CD8-positive, alpha-beta T cell (primary cell): ENCODE measurements at regions of chr16 and their contacts with region 1.

Region 1: DNA sequence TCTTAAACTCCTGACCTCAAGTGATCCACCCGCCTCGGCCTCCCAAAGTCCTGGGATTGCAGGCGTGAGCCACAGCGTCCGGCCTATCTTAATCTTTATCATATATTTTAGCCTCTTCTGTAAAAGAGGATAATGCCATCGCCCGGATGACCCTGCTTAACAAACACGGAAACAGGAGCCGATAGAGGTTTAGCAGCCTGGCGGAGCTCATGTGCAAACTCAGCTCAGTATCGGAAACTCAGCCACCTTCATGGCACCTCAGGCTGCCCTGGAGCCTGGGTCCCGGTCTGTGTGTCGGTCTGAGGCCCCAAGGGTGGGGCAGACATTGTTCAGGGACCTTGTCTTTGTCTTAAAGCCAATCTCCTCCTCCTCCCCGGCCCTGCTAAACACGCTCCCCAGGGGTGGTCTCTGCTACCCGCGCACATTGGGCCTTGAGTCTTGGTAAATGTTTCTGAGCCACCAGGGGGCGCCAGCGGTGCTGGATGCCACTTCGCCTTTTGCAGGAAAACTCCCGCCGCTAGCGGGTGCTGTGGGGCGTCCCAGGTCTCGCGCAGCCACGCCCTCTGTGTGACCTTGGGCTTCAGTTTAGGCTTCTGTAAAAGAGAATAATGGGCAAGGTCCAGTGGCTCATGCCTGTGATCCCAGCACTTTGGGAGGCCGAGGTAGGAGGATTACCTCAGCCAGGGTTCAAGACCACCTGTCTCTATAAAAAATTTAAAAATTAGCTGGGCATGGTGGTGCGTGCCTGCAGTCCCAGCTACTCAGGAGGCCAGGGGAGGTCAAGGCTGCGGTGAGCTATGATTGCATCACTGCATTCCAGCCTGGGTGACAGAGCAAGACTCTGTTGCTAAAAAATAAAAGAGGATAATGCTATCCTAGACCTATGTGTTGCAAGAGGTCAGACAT is 2.7 kb downstream of the CETP start:
- DNase-seq: peak; percentile 91 to 99 (median 95)
- ATAC-seq: peak; percentile 96
- H3K4me3 ChIP-seq: no peak overlapping the region
- H3K4me3 Mint-ChIP-seq: no peak overlapping the region
- H3K27ac ChIP-seq: no peak overlapping the region
- H3K27ac Mint-ChIP-seq: peak overlapping the region; percentile 84
- H3K4me1 ChIP-seq: peaks cover 21% of the 10 kb centered on the region
- H3K4me1 Mint-ChIP-seq: peaks cover 23% of the 10 kb centered on the region
- H3K27me3 ChIP-seq: no peaks in the 10 kb centered on the region
- H3K27me3 Mint-ChIP-seq: no peaks in the 10 kb centered on the region
- CTCF ChIP-seq: peak; percentile 99

Region 2: DNA sequence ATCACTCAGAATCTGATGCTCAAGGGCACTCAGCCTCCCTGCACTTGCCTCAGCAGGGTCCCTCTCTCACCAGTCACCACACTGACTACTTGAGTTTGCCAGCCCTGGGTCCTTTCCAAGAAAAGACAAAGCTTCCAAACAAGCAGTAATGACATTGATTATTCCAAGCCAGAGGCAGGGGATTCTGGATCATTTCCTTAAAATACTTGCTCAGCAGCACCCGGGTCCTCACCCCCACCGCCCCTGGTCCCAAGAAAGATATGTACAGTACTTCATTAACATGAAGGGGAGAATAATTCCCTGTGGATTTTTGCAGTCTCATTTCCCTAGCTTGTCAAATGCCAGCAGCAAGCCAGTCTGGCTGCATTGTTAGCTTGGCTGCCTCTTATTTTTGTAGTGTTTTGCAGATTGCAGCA is 856.4 kb before region 1 on chr16:
- CTCF ChIA-PET with region 1: no interaction called
- POLR2A ChIA-PET with region 1: no interaction called
- intact Hi-C with region 1: no loop called
- DNase-seq: no peak
- ATAC-seq: no peak
- H3K4me3 ChIP-seq: no peak overlapping the region
- H3K4me3 Mint-ChIP-seq: no peak overlapping the region
- H3K27ac ChIP-seq: no peak overlapping the region
- H3K27ac Mint-ChIP-seq: no peak overlapping the region
- H3K4me1 ChIP-seq: no peaks in the 10 kb centered on the region
- H3K4me1 Mint-ChIP-seq: no peaks in the 10 kb centered on the region
- H3K27me3 ChIP-seq: no peaks in the 10 kb centered on the region
- H3K27me3 Mint-ChIP-seq: peaks cover 10% of the 10 kb centered on the region
- CTCF ChIP-seq: no peak

Region 3: DNA sequence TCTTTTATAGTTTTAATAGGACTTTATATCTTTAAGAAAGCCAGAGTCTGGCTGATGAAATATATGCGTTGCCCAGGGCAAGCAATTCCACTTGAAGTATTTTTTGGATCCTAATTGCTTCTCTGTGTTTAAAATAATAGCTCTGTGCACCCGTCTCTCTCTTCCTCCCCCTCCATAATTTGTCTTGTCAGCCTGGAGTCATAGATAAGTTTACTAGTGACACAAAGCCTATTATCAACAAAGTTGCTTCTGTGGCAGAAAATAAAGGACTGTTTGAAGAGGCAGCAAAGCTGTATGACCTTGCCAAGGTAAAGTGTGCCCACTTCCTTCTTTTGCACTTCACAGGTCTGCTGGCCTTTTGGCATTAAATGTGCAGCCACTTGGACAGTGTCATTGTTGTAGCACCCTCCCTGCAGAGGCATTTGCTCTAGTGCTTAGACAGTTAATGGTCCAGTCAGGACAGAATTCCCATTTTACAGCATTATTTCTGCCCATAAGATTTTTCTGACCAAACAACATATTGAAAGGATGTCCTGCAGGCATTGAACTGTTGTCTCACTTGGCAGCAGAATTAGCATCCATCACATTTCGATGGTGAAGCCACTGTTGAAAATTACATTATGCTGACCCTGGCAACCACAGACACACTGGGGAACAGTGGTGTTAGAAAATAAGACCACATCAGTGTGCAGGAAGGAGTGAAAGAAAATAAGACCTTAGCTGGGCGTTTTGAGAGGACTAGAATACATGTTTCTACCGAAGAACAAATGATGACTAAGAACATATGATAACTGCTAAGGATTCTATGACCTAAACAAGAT is 127.9 kb before region 1 on chr16:
- CTCF ChIA-PET with region 1: no interaction called
- POLR2A ChIA-PET with region 1: no interaction called
- intact Hi-C with region 1: no loop called
- DNase-seq: no peak
- ATAC-seq: no peak
- H3K4me3 ChIP-seq: no peak overlapping the region
- H3K4me3 Mint-ChIP-seq: no peak overlapping the region
- H3K27ac ChIP-seq: no peak overlapping the region
- H3K27ac Mint-ChIP-seq: no peak overlapping the region
- H3K4me1 ChIP-seq: no peaks in the 10 kb centered on the region
- H3K4me1 Mint-ChIP-seq: peaks cover 19% of the 10 kb centered on the region
- H3K27me3 ChIP-seq: no peaks in the 10 kb centered on the region
- H3K27me3 Mint-ChIP-seq: no peaks in the 10 kb centered on the region
- CTCF ChIP-seq: no peak

Region 4: DNA sequence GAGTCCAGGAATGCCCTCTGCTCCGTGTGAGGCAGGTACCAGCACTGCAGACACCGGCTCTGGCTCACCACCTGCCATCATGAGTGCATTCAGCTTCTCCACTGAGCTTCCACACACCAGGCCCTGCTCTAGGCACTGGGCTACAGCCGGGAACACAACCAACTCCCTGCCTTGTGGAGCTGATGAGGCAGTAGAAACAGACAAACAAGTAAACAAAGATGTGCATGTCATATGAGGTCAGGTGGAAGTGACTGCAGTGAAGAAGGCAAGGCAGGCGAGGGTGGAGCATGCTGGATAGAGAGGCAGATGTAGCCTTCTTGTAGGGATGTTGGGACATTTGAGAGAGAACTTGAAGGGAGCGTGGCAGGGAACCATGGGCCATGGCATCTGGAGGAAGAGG is 29.8 kb after region 1 on chr16:
- CTCF ChIA-PET with region 1: interaction called, 117 read pairs
- POLR2A ChIA-PET with region 1: interaction called, 7 read pairs
- intact Hi-C with region 1: loop called (anchors 1 kb)
- DNase-seq: peak in 3 of 9 experiments; percentile 21 to 58 (median 45)
- ATAC-seq: peak; percentile 16
- H3K4me3 ChIP-seq: peak overlapping the region; percentile 36 to 40
- H3K4me3 Mint-ChIP-seq: peak overlapping the region; percentile 100
- H3K27ac ChIP-seq: peak overlapping the region; percentile 38 to 90
- H3K27ac Mint-ChIP-seq: peak overlapping the region; percentile 99
- H3K4me1 ChIP-seq: peaks cover 73% of the 10 kb centered on the region
- H3K4me1 Mint-ChIP-seq: peaks cover 78% of the 10 kb centered on the region
- H3K27me3 ChIP-seq: no peaks in the 10 kb centered on the region
- H3K27me3 Mint-ChIP-seq: no peaks in the 10 kb centered on the region
- CTCF ChIP-seq: no peak

Region 5: DNA sequence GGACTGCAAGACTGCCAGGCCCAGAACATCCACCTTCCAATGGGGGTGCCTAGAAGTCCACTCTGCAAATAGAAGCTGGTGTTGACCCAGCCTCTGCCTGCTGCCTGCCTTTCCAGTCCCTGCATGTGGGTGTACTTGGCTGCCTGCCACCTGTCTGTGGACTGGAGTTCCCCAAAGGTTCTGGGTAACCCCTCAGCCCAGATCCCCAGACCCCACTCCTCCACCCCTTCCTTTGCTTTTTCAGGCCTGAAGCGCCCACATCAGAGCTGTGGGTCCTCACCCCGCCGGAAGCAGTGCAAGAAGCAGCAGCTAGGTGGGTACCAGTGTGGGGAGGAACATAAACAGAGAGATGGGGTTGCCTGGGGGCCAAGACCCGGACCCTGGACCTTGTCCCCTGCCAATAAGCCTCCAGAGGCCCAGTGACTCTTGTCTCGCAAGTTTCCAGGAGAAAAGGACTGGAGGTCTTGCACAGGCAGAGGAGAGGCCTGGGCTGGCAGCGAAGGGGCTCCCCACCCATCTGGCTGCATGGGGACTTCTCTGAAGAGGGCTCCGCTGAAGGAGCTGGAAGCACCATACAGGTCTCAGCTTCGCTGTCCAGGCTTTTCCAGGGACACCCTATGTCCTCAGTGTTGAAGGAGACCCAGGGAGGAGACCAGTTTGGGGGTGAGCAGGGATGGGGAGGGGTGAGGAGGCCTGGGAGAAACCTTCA is 59.2 kb after region 1 on chr16:
- CTCF ChIA-PET with region 1: interaction called, 39 read pairs
- POLR2A ChIA-PET with region 1: interaction called, 3 read pairs
- intact Hi-C with region 1: no loop called
- DNase-seq: peak; percentile 54 to 95 (median 84)
- ATAC-seq: peak; percentile 86
- H3K4me3 ChIP-seq: peak overlapping the region in 1 of 2 experiments; percentile 34
- H3K4me3 Mint-ChIP-seq: peak overlapping the region; percentile 67
- H3K27ac ChIP-seq: peak overlapping the region in 1 of 2 experiments; percentile 60
- H3K27ac Mint-ChIP-seq: peak overlapping the region; percentile 89
- H3K4me1 ChIP-seq: peaks cover 93% of the 10 kb centered on the region
- H3K4me1 Mint-ChIP-seq: peaks cover 93% of the 10 kb centered on the region
- H3K27me3 ChIP-seq: no peaks in the 10 kb centered on the region
- H3K27me3 Mint-ChIP-seq: no peaks in the 10 kb centered on the region
- CTCF ChIP-seq: no peak

Region 6: GRCh38 chr16:57045694-57046381 is 81.3 kb after region 1 on chr16:
- CTCF ChIA-PET with region 1: interaction called, 96 read pairs
- POLR2A ChIA-PET with region 1: interaction called, 11 read pairs
- intact Hi-C with region 1: loop called (anchors 1 kb)
- DNase-seq: peak in 8 of 9 experiments; percentile 27 to 76 (median 58)
- ATAC-seq: peak; percentile 5
- H3K4me3 ChIP-seq: no peak overlapping the region
- H3K4me3 Mint-ChIP-seq: peak overlapping the region; percentile 50
- H3K27ac ChIP-seq: peak overlapping the region; percentile 2 to 59
- H3K27ac Mint-ChIP-seq: peak overlapping the region; percentile 93
- H3K4me1 ChIP-seq: peaks cover 52% of the 10 kb centered on the region
- H3K4me1 Mint-ChIP-seq: peaks cover 54% of the 10 kb centered on the region
- H3K27me3 ChIP-seq: no peaks in the 10 kb centered on the region
- H3K27me3 Mint-ChIP-seq: no peaks in the 10 kb centered on the region
- CTCF ChIP-seq: peak; percentile 38

Region 7: DNA sequence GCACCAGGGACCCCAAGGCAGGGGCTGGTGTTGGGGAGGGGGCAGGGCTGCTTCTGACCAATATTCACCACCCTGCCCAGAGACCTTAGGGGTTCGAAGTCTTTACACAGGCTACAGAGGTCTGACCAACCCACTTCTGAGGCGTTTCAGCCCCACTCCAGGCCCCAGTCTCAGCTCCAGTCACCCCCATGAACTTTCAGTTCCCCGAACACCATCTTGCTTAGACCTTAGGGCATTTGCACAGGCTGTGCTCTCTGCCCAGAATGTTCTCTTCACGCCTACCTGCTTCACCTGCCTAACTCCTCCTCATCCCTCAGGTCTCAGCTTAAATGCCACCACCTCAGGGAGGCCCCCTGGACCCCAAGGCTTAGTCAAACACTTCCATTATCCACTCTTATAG is 102.1 kb after region 1 on chr16:
- CTCF ChIA-PET with region 1: interaction called, 14 read pairs
- POLR2A ChIA-PET with region 1: interaction called, 3 read pairs
- intact Hi-C with region 1: no loop called
- DNase-seq: no peak
- ATAC-seq: no peak
- H3K4me3 ChIP-seq: no peak overlapping the region
- H3K4me3 Mint-ChIP-seq: no peak overlapping the region
- H3K27ac ChIP-seq: no peak overlapping the region
- H3K27ac Mint-ChIP-seq: peak overlapping the region; percentile 80
- H3K4me1 ChIP-seq: peaks cover 9% of the 10 kb centered on the region
- H3K4me1 Mint-ChIP-seq: peaks cover 19% of the 10 kb centered on the region
- H3K27me3 ChIP-seq: no peaks in the 10 kb centered on the region
- H3K27me3 Mint-ChIP-seq: no peaks in the 10 kb centered on the region
- CTCF ChIP-seq: no peak

Region 8: GRCh38 chr16:57167953-57168352 is 203.5 kb after region 1 on chr16:
- CTCF ChIA-PET with region 1: interaction called, 13 read pairs
- POLR2A ChIA-PET with region 1: no interaction called
- intact Hi-C with region 1: loop called (anchors 1 kb)
- DNase-seq: peak in 3 of 9 experiments; percentile 21 to 85 (median 76)
- ATAC-seq: peak; percentile 99
- H3K4me3 ChIP-seq: no peak overlapping the region
- H3K4me3 Mint-ChIP-seq: no peak overlapping the region
- H3K27ac ChIP-seq: no peak overlapping the region
- H3K27ac Mint-ChIP-seq: no peak overlapping the region
- H3K4me1 ChIP-seq: no peaks in the 10 kb centered on the region
- H3K4me1 Mint-ChIP-seq: peaks cover 9% of the 10 kb centered on the region
- H3K27me3 ChIP-seq: no peaks in the 10 kb centered on the region
- H3K27me3 Mint-ChIP-seq: no peaks in the 10 kb centered on the region
- CTCF ChIP-seq: peak; percentile 70